Activated naive CD4-positive, alpha-beta T cell treated with anti-CD3 and anti-CD28 coated beads for 36 hours (primary cell): ENCODE measurements at regions of chr6 and their contacts with region 1.

Region 1: GRCh38 chr6:107731422-107732319 is 92.4 kb downstream of the SCML4 start:
- DNase-seq: peak; percentile 43
- H3K4me3 Mint-ChIP-seq: peak overlapping the region; percentile 80
- H3K27ac Mint-ChIP-seq: peak overlapping the region; percentile 86
- H3K4me1 Mint-ChIP-seq: peaks cover 74% of the 10 kb centered on the region
- H3K27me3 Mint-ChIP-seq: no peaks in the 10 kb centered on the region

Region 2: DNA sequence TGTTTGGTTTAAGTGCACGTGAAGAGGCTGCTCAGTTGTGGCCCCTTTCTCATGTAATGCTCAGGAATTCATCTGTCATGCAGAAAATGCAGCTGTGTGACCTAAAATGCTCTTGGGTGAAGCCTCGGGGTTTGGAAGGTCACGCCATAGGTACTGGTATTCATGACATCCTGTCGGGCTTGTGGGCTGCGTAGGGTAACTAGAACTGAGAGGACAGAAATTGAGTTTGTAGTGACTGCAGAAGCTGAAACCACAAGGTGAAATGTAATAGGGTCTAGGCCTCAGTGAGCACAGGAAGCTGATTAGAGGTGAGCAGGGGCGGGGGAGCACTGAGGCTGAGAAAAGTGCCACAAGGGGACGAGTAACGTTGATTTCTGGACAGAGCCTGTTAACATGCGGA is 113.0 kb before region 1 on chr6:
- CTCF ChIA-PET with region 1: no interaction called
- intact Hi-C with region 1: no loop called
- DNase-seq: peak; percentile 72
- H3K4me3 Mint-ChIP-seq: no peak overlapping the region
- H3K27ac Mint-ChIP-seq: peak overlapping the region; percentile 28
- H3K4me1 Mint-ChIP-seq: peaks cover 17% of the 10 kb centered on the region
- H3K27me3 Mint-ChIP-seq: no peaks in the 10 kb centered on the region

Region 3: GRCh38 chr6:107645800-107646575 is 85.7 kb before region 1 on chr6:
- CTCF ChIA-PET with region 1: no interaction called
- intact Hi-C with region 1: no loop called
- DNase-seq: no peak
- H3K4me3 Mint-ChIP-seq: no peak overlapping the region
- H3K27ac Mint-ChIP-seq: no peak overlapping the region
- H3K4me1 Mint-ChIP-seq: no peaks in the 10 kb centered on the region
- H3K27me3 Mint-ChIP-seq: no peaks in the 10 kb centered on the region

Region 4: GRCh38 chr6:107756660-107757355 is 25.1 kb after region 1 on chr6:
- CTCF ChIA-PET with region 1: interaction called, 3 read pairs
- intact Hi-C with region 1: loop called (anchors 2 kb)
- DNase-seq: no peak
- H3K4me3 Mint-ChIP-seq: no peak overlapping the region
- H3K27ac Mint-ChIP-seq: peak overlapping the region; percentile 28
- H3K4me1 Mint-ChIP-seq: peaks cover 44% of the 10 kb centered on the region
- H3K27me3 Mint-ChIP-seq: no peaks in the 10 kb centered on the region

Region 5: GRCh38 chr6:107786709-107787588 is 55.3 kb after region 1 on chr6:
- CTCF ChIA-PET with region 1: interaction called, 25 read pairs
- intact Hi-C with region 1: loop called (anchors 1 kb)
- DNase-seq: peak; percentile 56
- H3K4me3 Mint-ChIP-seq: peak overlapping the region; percentile 57
- H3K27ac Mint-ChIP-seq: peak overlapping the region; percentile 8
- H3K4me1 Mint-ChIP-seq: peaks cover 79% of the 10 kb centered on the region
- H3K27me3 Mint-ChIP-seq: no peaks in the 10 kb centered on the region

Region 6: DNA sequence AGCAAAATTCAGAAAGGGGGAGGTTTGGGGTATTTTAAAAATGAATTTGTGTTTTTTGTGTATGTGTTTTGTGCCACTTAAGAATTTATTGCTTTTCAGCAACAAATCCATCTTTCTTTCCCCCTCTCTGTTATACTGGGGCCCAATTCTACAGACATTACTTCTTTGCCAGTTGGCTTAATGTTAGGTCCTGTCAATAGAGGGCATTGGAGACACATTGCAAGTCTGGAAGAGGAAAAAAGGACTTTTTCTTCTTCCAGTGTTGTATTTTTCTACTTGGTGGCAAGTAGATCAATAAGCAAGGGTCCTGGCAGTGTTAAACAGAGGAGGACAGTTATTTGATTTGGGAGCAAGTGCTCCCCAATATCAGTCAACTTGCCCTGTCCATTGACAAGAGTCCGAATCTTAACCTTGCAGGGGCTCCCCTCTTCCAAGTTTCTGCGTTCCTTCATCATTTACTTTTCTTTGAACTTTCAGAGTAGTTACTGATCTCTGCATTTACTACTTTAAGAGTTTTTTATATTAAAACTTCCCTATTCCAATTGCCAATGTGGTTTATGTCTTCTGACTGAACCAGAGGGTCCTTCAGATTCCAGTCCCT is 69.0 kb after region 1 on chr6:
- CTCF ChIA-PET with region 1: interaction called, 5 read pairs
- intact Hi-C with region 1: loop called (anchors 1 kb)
- DNase-seq: no peak
- H3K4me3 Mint-ChIP-seq: no peak overlapping the region
- H3K27ac Mint-ChIP-seq: peak overlapping the region; percentile 1
- H3K4me1 Mint-ChIP-seq: peaks cover 66% of the 10 kb centered on the region
- H3K27me3 Mint-ChIP-seq: no peaks in the 10 kb centered on the region

Region 7: GRCh38 chr6:107820338-107821261 is 88.9 kb after region 1 on chr6:
- CTCF ChIA-PET with region 1: interaction called, 37 read pairs
- intact Hi-C with region 1: loop called (anchors 1 kb)
- DNase-seq: peak; percentile 55
- H3K4me3 Mint-ChIP-seq: peak overlapping the region; percentile 88
- H3K27ac Mint-ChIP-seq: peak overlapping the region; percentile 98
- H3K4me1 Mint-ChIP-seq: peaks cover 83% of the 10 kb centered on the region
- H3K27me3 Mint-ChIP-seq: no peaks in the 10 kb centered on the region

Region 8: DNA sequence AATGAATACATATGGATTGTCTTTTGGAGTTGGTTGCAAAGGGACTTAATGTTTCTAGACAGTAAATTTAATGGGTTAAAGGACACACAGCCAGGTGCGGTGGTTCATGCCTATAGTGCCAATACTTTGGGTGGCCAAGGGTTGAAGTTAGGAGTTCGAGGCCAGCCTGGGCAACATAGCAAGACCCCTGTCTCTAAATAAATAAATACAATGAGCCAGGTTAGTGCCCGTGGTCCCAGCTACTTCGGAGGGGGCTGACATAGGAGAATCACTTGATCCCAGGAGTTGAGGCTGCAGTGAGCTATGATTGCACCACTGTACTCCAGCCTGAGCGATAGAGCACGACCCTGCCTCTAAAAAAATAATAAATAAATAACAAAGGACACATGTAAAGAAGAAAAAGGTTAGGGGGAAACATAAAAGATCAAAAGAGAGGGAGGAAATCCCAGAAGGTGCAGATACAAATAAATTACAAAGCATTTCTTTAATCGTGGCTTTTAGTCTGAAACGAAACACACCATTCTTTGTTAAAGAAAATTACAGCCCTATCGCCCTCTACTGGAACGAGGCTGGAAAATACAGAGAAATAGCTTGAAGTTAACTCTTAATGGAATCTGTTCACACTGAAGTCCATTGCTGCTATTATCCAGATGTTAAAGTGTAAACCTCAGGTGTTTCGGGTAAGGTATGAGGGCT is 135.1 kb after region 1 on chr6:
- CTCF ChIA-PET with region 1: interaction called, 29 read pairs
- intact Hi-C with region 1: loop called (anchors 1 kb)
- DNase-seq: peak; percentile 56
- H3K4me3 Mint-ChIP-seq: no peak overlapping the region
- H3K27ac Mint-ChIP-seq: no peak overlapping the region
- H3K4me1 Mint-ChIP-seq: peaks cover 35% of the 10 kb centered on the region
- H3K27me3 Mint-ChIP-seq: no peaks in the 10 kb centered on the region